ENCODE measurements at regions of chr17 and their contacts with region 1.

Region 1: DNA sequence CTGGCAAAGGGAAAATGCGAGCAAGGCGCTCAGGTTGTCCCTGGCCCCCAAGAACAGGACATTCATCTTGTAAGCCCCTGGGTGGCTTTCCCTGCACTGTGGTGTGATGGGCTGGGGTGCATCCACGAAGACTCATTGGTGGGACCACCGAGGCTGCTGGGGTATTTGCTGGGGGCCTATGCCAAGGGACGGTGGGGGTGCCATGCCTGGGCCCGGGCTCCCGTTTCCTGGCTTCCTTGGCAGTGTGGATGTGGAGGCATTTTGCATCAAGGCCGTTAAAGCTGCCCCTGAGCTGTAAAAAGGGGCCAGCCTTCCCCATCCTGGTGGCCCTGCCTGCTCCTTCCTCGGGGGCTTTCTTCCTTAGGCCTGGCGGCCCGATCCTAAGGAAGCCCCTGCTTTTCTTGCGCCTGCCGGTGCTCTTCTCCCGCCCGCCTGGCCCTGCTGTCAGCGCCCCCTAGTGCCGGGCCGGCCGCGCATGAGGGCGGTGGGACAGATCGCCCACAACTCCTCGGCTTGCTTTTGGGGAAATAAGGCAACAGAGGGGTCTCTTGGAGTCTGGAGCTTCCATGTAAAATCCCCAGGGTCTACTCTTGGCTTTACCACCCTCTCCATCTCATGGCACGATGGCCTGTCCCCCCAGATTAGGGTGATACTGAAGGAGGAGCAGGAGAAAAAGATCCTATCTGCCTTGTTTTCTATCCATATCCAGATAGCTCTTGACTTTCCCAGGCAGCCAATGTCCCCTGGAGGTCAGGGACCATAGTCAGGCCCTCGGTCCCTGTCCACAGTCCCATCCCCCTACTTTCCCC is 9.8 kb upstream of the TBX2 start:
- DNase-seq: no peak
- H3K4me3 ChIP-seq: no peak overlapping the region
- H3K27ac ChIP-seq: no peak overlapping the region
- H3K4me1 ChIP-seq: no peaks in the 10 kb centered on the region
- H3K27me3 ChIP-seq: no peaks in the 10 kb centered on the region
- CTCF ChIP-seq: peak; percentile 70 to 85 (median 74)
- POLR2A ChIP-seq: no peak

Region 2: DNA sequence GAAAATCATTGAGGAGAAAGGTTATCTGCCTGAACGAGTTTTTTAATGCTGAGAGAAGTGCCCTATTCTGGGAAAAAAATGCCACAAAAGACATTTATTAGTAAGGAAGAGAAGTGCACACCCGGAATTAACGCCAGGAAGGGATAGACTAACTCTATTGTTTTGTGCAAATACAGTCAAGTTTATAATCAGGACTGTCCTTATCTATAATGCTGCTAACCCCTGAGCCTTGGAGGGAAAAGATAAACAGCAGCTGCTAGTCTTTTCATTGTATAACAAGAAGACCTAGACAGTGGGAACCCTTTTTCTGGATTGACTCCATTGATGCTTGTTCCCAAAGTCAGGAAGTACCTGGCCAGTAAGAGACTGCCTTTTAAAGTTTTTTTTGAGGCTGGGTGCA is 685.7 kb before region 1 on chr17:
- intact Hi-C with region 1: no loop called
- DNase-seq: no peak
- H3K4me3 ChIP-seq: no peak overlapping the region
- H3K27ac ChIP-seq: no peak overlapping the region
- H3K4me1 ChIP-seq: no peaks in the 10 kb centered on the region
- H3K27me3 ChIP-seq: no peaks in the 10 kb centered on the region
- CTCF ChIP-seq: no peak
- POLR2A ChIP-seq: no peak

Region 3: DNA sequence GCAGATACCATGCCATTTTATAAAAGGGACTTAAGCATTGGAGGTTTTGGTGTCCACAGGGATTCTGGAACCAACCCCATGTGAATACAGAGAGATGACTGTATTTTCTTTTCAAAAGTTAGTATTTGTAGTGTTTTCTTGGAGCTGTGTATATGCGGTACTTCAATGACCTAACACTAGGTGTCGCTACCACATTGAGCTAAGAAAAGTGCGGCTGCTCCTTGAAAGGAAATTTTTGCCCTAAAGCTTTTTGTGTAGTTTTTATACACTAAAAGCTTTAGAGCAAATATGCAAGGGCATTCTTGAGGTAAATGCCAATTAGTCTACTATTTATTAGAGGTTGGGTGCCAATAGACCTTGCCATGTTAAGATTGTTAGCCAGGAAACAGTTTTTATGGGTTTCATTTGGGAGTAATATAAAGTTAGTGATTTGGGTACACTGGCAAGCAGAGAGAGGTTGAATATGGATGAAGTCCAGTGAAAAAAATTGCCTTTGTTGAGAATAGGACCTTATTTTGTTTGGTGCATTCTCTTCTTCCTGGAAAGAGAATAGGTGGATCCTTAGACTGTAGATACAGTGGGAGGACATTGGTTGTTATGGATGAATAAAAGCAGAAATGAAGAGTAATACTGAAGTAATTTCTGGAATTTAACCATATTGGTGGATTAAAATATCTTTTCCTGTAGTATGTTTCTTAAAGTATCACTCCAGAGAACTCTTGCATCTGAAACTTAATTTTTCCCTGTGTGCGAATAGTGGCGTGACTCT is 668.9 kb before region 1 on chr17:
- intact Hi-C with region 1: loop called (anchors 10 kb)
- DNase-seq: peak; percentile 53
- H3K4me3 ChIP-seq: no peak overlapping the region
- H3K27ac ChIP-seq: no peak overlapping the region
- H3K4me1 ChIP-seq: no peaks in the 10 kb centered on the region
- H3K27me3 ChIP-seq: no peaks in the 10 kb centered on the region
- CTCF ChIP-seq: peak; percentile 62 to 85 (median 84)
- POLR2A ChIP-seq: no peak

Region 4: GRCh38 chr17:61002316-61002736 is 387.5 kb before region 1 on chr17:
- intact Hi-C with region 1: loop called (anchors 2 kb)
- DNase-seq: no peak
- H3K4me3 ChIP-seq: no peak overlapping the region
- H3K27ac ChIP-seq: no peak overlapping the region
- H3K4me1 ChIP-seq: no peaks in the 10 kb centered on the region
- H3K27me3 ChIP-seq: no peaks in the 10 kb centered on the region
- CTCF ChIP-seq: peak; percentile 14 to 66 (median 57)
- POLR2A ChIP-seq: no peak

Region 5: GRCh38 chr17:61157246-61157886 is 232.5 kb before region 1 on chr17:
- intact Hi-C with region 1: loop called (anchors 10 kb)
- DNase-seq: no peak
- H3K4me3 ChIP-seq: peak overlapping the region in 1 of 2 donors; percentile 14
- H3K27ac ChIP-seq: no peak overlapping the region
- H3K4me1 ChIP-seq: no peaks in the 10 kb centered on the region
- H3K27me3 ChIP-seq: no peaks in the 10 kb centered on the region
- CTCF ChIP-seq: no peak
- POLR2A ChIP-seq: no peak

Region 6: DNA sequence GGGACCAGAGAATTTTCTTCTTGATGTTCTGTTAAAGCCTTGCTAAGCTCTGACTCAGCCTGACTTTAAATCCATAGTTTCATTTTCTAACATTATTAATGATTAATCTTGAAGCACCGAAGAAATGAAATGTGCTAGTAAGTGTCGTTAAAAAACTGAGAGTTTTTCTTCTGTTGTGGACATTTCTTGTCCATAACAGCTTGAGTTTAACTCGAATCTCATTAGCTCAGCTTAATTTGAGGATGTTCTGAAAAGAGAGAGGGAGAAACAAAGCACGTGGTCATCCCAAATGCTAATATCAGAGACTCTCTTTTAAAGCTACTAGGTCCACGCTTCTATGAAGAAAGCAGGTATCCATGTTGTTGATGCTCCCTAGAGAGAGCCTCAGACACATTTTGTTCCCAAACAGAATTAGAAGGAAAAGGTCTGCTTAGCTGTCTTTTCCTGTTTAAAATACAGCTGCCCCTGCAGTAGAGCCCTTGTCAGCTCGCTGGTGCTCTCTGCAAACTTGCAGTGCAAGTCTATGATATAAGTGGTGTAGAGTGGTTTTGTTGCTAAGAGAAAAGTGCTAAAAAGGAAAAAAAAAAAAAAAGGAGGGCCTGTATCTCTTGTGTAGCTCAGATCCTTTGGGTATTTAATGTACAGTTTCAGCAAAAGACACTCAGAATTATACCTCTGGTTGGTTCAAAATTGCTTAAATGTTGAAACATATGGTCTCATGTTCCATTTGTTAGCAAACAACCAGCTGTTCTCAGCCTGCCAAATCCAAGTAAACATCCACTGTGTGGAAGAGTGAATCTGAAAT is 181.4 kb before region 1 on chr17:
- intact Hi-C with region 1: loop called (anchors 10 kb)
- DNase-seq: no peak
- H3K4me3 ChIP-seq: no peak overlapping the region
- H3K27ac ChIP-seq: peak overlapping the region; percentile 45 to 54
- H3K4me1 ChIP-seq: no peaks in the 10 kb centered on the region
- H3K27me3 ChIP-seq: no peaks in the 10 kb centered on the region
- CTCF ChIP-seq: no peak
- POLR2A ChIP-seq: no peak

Measured in prostate gland (tissue), 2 donors.